ENCODE measurements at regions of chr15 and their contacts with region 1.

Region 1: DNA sequence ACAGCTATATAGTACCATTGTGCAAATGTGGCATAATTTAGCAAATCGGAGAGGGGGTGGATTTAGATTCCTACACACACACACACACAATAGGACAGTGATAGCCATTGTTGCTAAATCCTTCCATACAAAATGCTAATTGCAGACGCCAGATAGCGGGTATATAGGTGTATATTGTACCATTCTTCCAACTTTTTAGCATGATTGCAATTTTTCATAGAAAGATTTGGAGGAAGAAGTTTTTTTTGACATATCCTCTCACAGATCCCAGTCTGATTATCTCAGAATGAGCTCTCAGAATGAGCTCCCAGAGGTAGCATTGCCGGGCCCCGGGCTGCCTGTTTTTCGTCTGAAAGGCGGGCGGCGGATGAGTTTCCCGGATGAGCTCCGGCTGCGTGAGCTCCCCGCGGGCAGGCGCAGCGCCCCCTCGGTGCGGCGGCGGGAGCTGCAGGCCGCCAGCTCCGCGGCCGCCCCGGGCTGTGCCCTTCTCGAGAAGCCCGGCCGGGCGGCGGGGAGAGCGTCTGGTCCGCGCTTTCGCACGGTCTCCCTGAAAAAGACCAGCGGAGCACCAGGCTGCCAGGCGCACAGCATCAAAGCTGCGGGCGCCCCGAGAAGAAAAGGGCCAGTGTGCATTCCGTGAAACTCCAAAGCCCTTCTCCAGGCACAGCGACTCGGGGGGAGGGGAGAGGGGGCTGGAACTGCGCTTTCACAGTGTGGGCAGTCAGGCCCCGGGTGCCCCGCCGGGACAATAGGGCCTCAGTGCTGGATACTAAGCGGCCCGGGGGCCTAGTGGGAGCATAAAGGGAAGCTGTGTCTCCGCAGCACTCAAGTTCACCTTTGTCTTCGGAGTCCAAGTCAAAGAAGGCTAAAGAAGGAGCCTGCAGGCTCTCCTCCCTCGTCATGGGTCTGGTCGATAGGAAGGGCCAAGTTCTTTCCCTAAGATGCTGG is 12.0 kb upstream of the SHC4 start:
- DNase-seq: no peak
- ATAC-seq: peak; percentile 98
- H3K4me3 ChIP-seq: peak overlapping the region; percentile 55 to 74
- H3K27ac ChIP-seq: peak overlapping the region; percentile 66
- H3K4me1 ChIP-seq: peaks cover 6% of the 10 kb centered on the region
- H3K27me3 ChIP-seq: no peaks in the 10 kb centered on the region
- CTCF ChIP-seq: peak; percentile 99

Region 2: DNA sequence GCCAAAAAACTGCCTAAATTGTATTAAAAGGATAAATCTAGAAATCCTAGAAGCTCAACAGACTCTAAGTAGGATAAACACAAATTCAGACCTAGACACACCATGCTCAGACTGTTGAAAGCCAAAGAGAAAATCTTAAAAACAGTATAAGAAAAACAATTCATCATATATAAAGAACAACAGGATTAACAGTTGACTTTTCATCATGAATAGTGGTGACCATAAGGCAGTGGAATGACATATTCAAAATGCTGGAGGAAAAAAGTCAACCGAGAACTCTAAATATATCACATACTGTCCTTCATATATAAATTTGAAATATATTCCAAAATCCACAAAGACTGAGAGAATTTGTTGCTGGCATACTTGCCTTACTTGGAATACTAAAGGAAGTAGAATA is 242.1 kb before region 1 on chr15:
- CTCF ChIA-PET with region 1: interaction called, 11 read pairs
- POLR2A ChIA-PET with region 1: no interaction called
- in situ Hi-C with region 1: no loop called
- intact Hi-C with region 1: no loop called
- DNase-seq: no peak
- ATAC-seq: no peak
- H3K4me3 ChIP-seq: no peak overlapping the region
- H3K27ac ChIP-seq: no peak overlapping the region
- H3K4me1 ChIP-seq: no peaks in the 10 kb centered on the region
- H3K27me3 ChIP-seq: no peaks in the 10 kb centered on the region
- CTCF ChIP-seq: no peak

Region 3: DNA sequence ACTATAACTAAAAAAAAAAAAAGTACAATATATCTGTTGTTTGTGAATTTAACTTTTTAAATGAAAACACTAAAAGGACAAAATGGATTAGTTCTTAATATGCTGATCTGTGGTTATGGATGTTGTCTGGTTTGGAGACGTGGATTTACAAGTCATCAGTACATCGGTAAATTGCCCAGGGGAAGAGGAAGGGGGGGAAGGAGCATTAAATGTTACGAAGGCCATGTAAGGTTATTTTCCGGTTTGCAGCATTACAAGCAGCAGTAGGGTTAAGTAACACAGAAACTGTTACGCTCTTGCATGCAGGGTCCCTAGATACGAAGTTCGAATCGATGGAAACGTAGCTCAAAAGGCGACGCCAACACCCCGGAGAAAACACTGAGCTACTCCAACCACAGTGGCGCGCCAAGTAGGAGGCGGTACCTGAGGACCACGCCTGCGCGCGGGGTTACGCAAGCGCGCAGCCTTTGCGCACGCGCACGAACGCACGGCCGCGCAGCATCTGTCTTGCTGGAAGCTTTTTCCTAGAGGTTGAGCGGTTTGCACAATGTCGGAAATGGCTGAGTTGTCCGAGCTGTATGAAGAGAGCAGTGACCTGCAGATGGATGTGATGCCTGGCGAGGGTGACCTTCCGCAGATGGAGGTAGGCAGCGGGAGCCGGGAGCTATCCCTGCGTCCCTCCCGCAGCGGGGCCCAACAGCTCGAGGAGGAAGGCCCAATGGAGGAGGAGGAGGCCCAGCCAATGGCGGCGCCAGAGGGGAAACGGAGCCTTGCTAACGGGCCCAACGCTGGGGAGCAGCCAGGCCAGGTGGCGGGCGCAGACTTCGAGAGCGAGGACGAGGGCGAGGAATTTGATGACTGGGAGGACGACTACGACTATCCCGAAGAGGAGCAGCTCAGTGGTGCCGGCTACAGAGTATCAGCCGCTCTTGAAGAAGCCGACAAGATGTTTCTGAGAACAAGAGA is 97.8 kb before region 1 on chr15 and contains the start of gene EID1:
- CTCF ChIA-PET with region 1: interaction called, 10 read pairs
- POLR2A ChIA-PET with region 1: no interaction called
- in situ Hi-C with region 1: no loop called
- intact Hi-C with region 1: no loop called
- DNase-seq: peak; percentile 88
- ATAC-seq: peak; percentile 100
- H3K4me3 ChIP-seq: peak within 1 kb of the TSS; percentile 79 to 98
- H3K27ac ChIP-seq: peak within 1 kb of the TSS; percentile 97
- H3K4me1 ChIP-seq: peaks cover 15% of the 10 kb centered on the region; the same call in 1 of the 2 replicates
- H3K27me3 ChIP-seq: peaks cover 8% of the 10 kb centered on the region; the same call in 1 of the 2 replicates
- CTCF ChIP-seq: no peak
- total RNA-seq, gene EID1: 102 TPM

Region 4: GRCh38 chr15:48914717-48915116 is 61.0 kb before region 1 on chr15:
- CTCF ChIA-PET with region 1: no interaction called
- POLR2A ChIA-PET with region 1: no interaction called
- in situ Hi-C with region 1: no loop called
- intact Hi-C with region 1: no loop called
- DNase-seq: no peak
- ATAC-seq: no peak
- H3K4me3 ChIP-seq: no peak overlapping the region
- H3K27ac ChIP-seq: no peak overlapping the region
- H3K4me1 ChIP-seq: no peaks in the 10 kb centered on the region
- H3K27me3 ChIP-seq: no peaks in the 10 kb centered on the region
- CTCF ChIP-seq: peak; percentile 8; the same call in 1 of the 2 replicates

Region 5: DNA sequence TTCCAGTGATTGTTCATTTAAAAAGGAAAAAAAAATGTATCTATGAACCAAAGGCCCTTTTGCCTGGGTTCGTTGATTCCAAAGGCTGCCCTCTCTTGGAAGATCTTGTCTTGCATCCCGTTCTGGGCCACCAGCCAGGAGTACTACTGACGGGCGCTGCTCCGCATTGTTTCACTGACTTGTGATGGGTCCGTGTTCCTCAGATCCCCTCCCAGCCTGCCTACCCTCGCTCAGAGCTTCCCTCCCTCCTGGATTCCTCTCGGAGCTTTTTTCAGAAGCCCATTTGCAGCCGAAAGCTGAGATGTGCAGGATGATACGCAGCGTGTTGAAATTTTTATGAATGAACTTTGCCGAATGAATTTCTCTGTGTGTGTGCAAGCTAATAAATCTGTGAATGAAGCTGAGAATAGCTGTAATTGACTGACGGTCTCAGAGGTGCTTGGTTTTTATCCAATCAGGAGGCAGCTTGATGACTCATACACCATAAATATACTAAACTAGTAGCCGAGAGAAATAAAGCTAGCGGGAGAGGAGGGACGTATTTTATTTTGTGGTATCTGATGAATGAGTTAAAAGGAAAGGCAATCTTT is 12.1 kb before region 1 on chr15 and contains the start of gene SHC4:
- CTCF ChIA-PET with region 1: interaction called, 12 read pairs
- POLR2A ChIA-PET with region 1: no interaction called
- in situ Hi-C with region 1: no loop called
- intact Hi-C with region 1: no loop called
- DNase-seq: no peak
- ATAC-seq: peak; percentile 52
- H3K4me3 ChIP-seq: peak within 1 kb of the TSS; percentile 35 to 44
- H3K27ac ChIP-seq: no peak within 1 kb of the TSS
- H3K4me1 ChIP-seq: peaks cover 6% of the 10 kb centered on the region
- H3K27me3 ChIP-seq: peaks cover 20% of the 10 kb centered on the region
- CTCF ChIP-seq: peak; percentile 17; the same call in 1 of the 2 replicates
- total RNA-seq, gene SHC4: 0.10 TPM

Measured in Panc1 (cell line).